Heart right ventricle (tissue), 16 donors: ENCODE measurements at regions of chr19 and their contacts with region 1.

Region 1: GRCh38 chr19:6279931-6280591 is at the start of gene MLLT1:
- DNase-seq: peak; percentile 98
- ATAC-seq: peak; percentile 96 to 99 (median 98)
- H3K4me3 ChIP-seq: peak within 1 kb of the TSS; percentile 60 to 98 (median 85)
- H3K27ac ChIP-seq: peak within 1 kb of the TSS; percentile 17 to 95 (median 77)
- H3K4me1 ChIP-seq: peaks cover 9 to 47% (median 39%) of the 10 kb centered on the region in 9 donors
- H3K27me3 ChIP-seq: no peaks in the 10 kb centered on the region
- CTCF ChIP-seq: peak; percentile 65 to 91 (median 75)
- total RNA-seq, gene MLLT1: 27.6 to 48.3 (median 32.4) TPM

Region 2: GRCh38 chr19:6196356-6196755 is 83.7 kb before region 1 on chr19:
- intact Hi-C with region 1: no loop called
- DNase-seq: no peak
- ATAC-seq: no peak
- H3K4me3 ChIP-seq: no peak overlapping the region
- H3K27ac ChIP-seq: no peak overlapping the region
- H3K4me1 ChIP-seq: peaks cover 4 to 20% (median 11%) of the 10 kb centered on the region in 9 donors
- H3K27me3 ChIP-seq: no peaks in the 10 kb centered on the region
- CTCF ChIP-seq: no peak

Region 3: DNA sequence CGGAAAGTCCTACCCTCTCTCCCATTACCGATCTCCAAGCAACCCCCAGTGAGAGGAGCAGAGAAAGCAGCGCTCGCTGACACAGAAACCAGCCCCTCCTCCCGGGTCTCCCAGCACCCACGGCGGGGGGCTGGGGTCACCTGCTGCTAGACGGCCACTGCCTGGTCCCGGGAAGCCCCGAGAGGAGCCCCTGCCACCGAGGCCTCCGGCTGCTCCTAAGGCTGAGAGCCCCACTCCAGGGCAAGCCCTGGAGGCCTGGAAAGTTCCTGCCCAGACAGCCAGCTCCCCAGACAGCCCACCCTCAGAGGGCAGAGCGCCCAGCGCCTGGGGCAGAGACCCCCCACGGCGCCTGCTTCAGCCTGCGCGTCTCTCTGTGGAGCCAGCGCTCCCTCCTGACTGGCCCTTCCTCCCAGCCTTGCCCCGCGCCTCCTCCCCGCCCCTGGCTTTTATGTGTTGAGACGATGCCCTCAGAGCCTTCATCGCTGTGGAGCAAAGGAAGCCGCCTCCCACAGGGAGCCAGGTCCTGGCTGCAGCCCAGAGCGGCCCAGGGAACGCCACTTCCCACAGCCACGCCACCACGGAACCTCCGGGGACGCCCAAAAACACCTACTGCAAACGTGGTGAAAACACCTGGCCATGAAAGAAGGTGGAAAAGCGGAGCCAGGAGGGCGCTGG is 51.4 kb before region 1 on chr19:
- intact Hi-C with region 1: loop called in 4 of 10 experiments (anchors 5 kb)
- DNase-seq: peak in 1 of 2 donors; percentile 21
- ATAC-seq: no peak
- H3K4me3 ChIP-seq: no peak overlapping the region
- H3K27ac ChIP-seq: no peak overlapping the region
- H3K4me1 ChIP-seq: peaks cover 13 to 46% (median 31%) of the 10 kb centered on the region in 9 donors
- H3K27me3 ChIP-seq: no peaks in the 10 kb centered on the region
- CTCF ChIP-seq: no peak

Region 4: GRCh38 chr19:6238643-6239281 is 41.3 kb before region 1 on chr19:
- intact Hi-C with region 1: loop called in 2 of 10 experiments (anchors 5 kb)
- DNase-seq: peak; percentile 53 to 67
- ATAC-seq: peak; percentile 8 to 53 (median 26)
- H3K4me3 ChIP-seq: peak overlapping the region in 3 of 10 donors; percentile 15 to 33 (median 17)
- H3K27ac ChIP-seq: peak overlapping the region in 9 of 10 donors; percentile 57 to 84 (median 77)
- H3K4me1 ChIP-seq: peaks cover 44 to 100% (median 88%) of the 10 kb centered on the region in 9 donors
- H3K27me3 ChIP-seq: no peaks in the 10 kb centered on the region
- CTCF ChIP-seq: peak in 2 of 9 donors; percentile 4 to 11

Region 5: GRCh38 chr19:6626764-6627163 is 346.7 kb after region 1 on chr19:
- intact Hi-C with region 1: no loop called
- DNase-seq: no peak
- ATAC-seq: no peak
- H3K4me3 ChIP-seq: no peak overlapping the region
- H3K27ac ChIP-seq: no peak overlapping the region
- H3K4me1 ChIP-seq: no peaks in the 10 kb centered on the region
- H3K27me3 ChIP-seq: peaks cover 0 to 56% (median 16%) of the 10 kb centered on the region in 7 donors
- CTCF ChIP-seq: no peak